ENCODE measurements at regions of chr3 and their contacts with region 1.

Region 1: GRCh38 chr3:187130346-187131066 is 8.8 kb downstream of the RPL39L start:
- DNase-seq: peak; percentile 47
- H3K4me3 Mint-ChIP-seq: peak overlapping the region; percentile 51
- H3K27ac Mint-ChIP-seq: peak overlapping the region; percentile 91
- H3K4me1 Mint-ChIP-seq: peaks cover 58% of the 10 kb centered on the region
- H3K27me3 Mint-ChIP-seq: no peaks in the 10 kb centered on the region

Region 2: DNA sequence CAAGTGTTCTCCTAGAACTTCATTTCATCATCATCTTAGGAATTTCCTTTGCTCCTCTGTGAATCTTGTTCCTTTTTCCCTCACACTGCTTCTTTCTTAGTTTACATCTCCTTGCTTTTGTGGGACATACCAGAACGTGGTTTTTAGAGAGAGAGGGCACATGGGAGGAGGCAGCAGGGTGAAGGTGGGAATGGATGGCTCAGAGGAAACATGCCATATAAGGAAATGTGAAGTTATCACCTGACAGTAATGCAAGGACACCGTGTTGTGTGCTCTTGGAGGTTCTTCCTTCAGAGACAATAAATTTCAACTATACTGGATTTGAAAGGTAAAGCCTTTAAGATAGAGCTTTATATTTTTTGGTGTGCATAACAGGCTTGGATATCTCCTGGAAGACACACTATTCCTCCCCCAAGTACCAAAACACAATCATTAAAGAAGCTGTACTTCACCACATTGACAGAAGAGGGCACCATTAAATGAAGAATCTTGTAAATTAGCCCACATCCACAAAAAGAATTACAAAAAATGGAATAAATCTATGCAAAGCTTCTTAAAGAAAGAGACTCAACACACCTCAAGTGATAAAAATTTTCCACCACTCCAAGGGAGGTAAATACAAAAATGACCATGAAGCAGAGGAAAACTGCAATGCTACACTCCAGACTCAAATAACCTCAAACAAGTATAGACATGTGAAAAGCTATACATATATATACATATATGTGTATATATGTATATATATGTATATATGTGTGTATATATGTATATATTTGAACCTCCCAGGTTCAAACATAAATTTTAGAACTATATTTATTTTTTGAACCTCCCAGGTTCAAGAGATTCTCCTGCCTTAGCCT is 17.3 kb before region 1 on chr3:
- intact Hi-C with region 1: loop called (anchors 2 kb)
- DNase-seq: no peak
- H3K4me3 Mint-ChIP-seq: no peak overlapping the region
- H3K27ac Mint-ChIP-seq: no peak overlapping the region
- H3K4me1 Mint-ChIP-seq: peaks cover 9% of the 10 kb centered on the region
- H3K27me3 Mint-ChIP-seq: no peaks in the 10 kb centered on the region

Measured in activated T-helper 1 cell treated with anti-CD3 and anti-CD28 coated beads, Interleukin-12 subunit alpha, Interleukin-12 subunit beta, Interleukin-2, Interleukin-4 antibody, amounts not matched to agents 30 ng/mL and 10 ng/mL and 1 ng/mL, durations not matched to agents 14 hours and 24 hours and 36 hours (primary cell).